Activated naive CD4-positive, alpha-beta T cell treated with anti-CD3 and anti-CD28 coated beads for 36 hours (primary cell): ENCODE measurements at regions of chr2 and their contacts with region 1.

Region 1: DNA sequence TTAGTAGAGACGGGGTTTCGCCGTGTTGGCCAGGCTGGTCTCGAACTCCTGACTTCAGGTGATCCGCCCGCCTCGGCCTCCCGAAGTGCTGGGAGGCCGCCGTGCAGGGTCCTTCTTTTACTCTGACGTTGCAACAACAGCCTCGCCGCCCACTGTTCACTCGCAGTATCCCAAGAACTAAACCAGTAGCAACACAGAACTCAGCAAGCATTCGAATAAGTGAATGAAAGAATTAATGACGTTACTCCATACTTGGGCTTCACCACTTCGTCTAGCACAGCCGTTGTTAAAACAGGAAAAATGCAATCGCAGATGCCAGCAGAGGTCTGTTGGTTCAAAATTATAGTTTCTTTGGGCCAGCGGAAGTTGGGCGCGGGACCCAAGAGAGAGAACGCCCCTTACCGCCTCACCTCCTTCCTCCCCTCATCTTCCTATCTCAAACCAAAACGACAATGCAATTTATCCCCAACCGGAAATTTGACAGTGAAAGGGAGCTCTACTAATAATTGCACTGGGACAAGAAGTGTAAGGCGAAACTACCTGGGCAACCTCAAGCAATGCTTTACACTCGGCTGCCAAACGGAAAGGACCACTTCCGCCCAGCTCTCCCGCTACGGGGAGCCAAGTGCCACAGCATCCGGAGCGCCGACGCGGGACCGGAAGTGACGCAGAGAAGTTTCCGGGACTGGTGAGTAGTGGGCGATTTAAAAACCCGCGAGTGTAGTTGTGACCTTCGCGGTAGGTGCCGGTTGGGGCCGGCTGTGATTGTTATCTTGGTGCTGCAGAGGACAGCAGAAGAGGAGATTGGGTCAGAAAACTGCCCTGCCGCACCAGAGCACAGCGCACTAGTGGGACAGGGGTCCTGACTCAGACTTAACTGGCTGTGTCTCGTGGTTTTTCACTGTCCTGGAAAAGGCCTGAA is at the starts of genes NIF3L1 and PPIL3:
- DNase-seq: peak; percentile 99
- H3K4me3 Mint-ChIP-seq: peak within 1 kb of the TSS; percentile 88
- H3K27ac Mint-ChIP-seq: peak within 1 kb of the TSS; percentile 97
- H3K4me1 Mint-ChIP-seq: peaks cover 50% of the 10 kb centered on the region
- H3K27me3 Mint-ChIP-seq: no peaks in the 10 kb centered on the region
- total RNA-seq, gene NIF3L1: 31.6 to 33.3 TPM
- total RNA-seq, gene PPIL3: 81.3 to 82.2 TPM

Region 2: GRCh38 chr2:200525882-200526651 is 362.9 kb before region 1 on chr2 and contains the start of gene SGO2:
- CTCF ChIA-PET with region 1: no interaction called
- intact Hi-C with region 1: loop called (anchors 1 kb)
- DNase-seq: peak; percentile 98
- H3K4me3 Mint-ChIP-seq: peak within 1 kb of the TSS; percentile 90
- H3K27ac Mint-ChIP-seq: peak within 1 kb of the TSS; percentile 84
- H3K4me1 Mint-ChIP-seq: peaks cover 17% of the 10 kb centered on the region
- H3K27me3 Mint-ChIP-seq: no peaks in the 10 kb centered on the region
- total RNA-seq, gene SGO2: 39.7 to 40.0 TPM

Region 3: DNA sequence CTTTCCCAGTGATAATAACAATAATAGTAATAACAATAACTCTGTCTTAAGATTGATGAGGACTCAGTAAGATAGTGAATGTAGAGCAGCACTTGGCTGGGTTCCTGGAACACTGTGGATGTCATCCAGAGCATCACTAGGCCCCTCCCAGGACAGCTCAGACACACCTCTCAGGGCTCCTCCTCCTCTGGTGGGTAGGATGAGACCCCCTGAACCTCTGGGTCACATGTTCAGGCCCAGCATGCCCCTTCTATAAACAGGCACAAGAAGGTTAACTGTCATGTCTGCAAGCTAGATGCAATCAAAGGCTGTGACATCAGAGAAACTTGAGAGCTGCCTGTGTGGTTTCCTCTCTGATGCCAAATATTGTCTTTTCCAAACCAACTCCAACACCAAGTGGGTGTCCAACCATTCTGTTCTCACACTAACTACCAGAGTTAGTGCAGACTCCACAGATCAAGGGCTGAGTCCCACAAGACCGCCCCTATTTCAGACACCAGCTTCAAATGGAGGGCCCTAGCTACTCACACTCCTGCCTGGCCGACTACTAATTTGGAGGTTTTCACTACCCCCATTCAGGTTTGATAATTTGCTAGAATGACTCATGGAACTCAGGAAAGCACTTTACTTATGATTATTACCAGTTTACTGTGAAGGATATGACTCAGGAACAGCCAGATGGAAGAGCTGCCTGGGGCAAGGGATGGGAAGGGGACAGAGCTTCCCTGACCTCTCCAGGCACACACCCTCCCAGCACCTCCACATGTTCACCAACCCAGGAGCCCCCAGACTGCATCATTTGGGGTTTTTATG is 123.6 kb before region 1 on chr2:
- CTCF ChIA-PET with region 1: no interaction called
- intact Hi-C with region 1: loop called (anchors 1 kb)
- DNase-seq: peak; percentile 70
- H3K4me3 Mint-ChIP-seq: peak overlapping the region; percentile 32
- H3K27ac Mint-ChIP-seq: peak overlapping the region; percentile 92
- H3K4me1 Mint-ChIP-seq: peaks cover 27% of the 10 kb centered on the region
- H3K27me3 Mint-ChIP-seq: no peaks in the 10 kb centered on the region

Region 4: GRCh38 chr2:200901459-200902072 is 12.6 kb after region 1 on chr2:
- CTCF ChIA-PET with region 1: interaction called, 7 read pairs
- intact Hi-C with region 1: loop called (anchors 1 kb)
- DNase-seq: peak; percentile 89
- H3K4me3 Mint-ChIP-seq: no peak overlapping the region
- H3K27ac Mint-ChIP-seq: peak overlapping the region; percentile 84
- H3K4me1 Mint-ChIP-seq: peaks cover 7% of the 10 kb centered on the region
- H3K27me3 Mint-ChIP-seq: no peaks in the 10 kb centered on the region

Region 5: DNA sequence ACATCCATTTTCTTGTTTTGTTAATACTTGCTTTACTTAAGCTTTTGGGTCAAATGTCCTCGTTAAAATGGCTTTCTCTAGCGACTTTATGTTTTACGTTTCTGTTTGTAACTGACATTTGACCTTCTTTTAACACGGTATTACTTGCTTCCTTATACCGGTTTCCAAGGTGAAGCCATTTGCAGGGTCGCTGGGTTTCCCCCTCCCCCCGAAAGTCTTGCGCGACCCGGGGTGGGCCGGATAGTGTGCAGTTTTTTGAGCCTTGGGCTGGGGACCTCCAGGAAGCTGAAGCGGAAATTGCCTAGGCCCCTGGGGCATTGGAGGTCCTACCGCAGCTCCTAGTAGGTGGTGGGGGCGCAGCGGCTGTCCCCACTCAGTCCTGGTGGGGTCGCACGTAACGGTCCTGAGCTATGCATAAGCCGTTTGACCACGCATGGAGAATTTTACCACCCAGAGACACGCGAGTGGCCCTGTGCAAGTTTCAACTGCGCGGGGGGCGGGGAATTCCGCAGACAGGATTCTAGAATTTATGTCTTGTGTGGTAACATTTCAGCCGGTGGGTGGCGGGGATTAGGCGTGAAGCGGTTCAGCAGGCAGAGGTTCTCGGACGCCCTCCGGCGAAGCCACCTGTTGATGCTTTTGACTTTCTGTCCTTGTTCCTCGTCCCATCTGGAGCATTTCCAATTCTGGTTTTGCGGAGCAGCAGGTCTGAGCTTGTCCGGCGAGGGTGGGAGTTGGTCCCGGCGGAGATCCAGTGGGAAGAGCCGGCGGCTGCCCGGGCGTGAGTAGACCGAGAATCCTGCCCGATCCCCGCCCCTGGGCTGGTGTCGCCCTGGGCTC is 229.4 kb after region 1 on chr2:
- CTCF ChIA-PET with region 1: interaction called, 4 read pairs
- intact Hi-C with region 1: loop called (anchors 1 kb)
- DNase-seq: peak; percentile 94
- H3K4me3 Mint-ChIP-seq: peak overlapping the region; percentile 96
- H3K27ac Mint-ChIP-seq: peak overlapping the region; percentile 100
- H3K4me1 Mint-ChIP-seq: peaks cover 41% of the 10 kb centered on the region
- H3K27me3 Mint-ChIP-seq: no peaks in the 10 kb centered on the region

Region 6: DNA sequence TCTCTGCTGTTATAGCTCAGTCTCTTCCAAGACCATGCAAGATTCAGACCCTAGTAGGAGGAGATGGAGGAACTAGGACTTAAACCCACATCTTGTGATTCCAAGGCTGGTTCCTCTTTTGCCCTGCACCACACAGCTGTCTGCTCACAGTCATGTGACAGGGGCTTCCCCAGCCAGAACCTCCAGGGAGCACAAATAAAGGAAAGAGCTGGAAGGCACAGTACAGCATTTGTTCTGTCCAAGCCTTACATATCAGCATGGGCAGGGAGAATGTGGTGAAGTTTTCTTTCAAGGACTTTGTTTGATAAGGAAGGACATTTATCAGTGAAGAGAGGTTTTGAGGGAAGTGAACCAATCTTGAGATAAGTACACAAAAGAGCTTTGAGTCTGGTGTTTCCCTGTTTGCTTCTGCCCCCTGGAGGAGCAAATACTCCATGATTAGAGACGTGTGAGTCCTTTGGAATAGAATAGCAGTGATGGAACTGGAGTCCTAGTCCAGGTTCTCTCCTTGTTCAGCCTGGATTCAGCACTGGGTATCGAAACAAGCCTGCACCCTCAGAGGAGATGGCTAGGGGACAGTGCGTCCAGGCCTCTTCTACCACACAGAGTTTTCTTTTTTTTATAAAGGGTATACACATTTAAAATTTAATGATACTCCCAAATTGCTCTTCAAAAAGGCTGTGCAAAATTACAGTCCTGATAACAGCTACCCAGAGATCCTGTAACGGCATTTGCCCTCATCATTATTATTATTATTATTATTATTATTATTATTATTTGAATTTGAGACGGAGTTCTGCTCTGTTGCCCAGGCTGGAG is 269.4 kb after region 1 on chr2:
- CTCF ChIA-PET with region 1: no interaction called
- intact Hi-C with region 1: loop called (anchors 1 kb)
- DNase-seq: peak; percentile 76
- H3K4me3 Mint-ChIP-seq: no peak overlapping the region
- H3K27ac Mint-ChIP-seq: peak overlapping the region; percentile 86
- H3K4me1 Mint-ChIP-seq: peaks cover 24% of the 10 kb centered on the region
- H3K27me3 Mint-ChIP-seq: no peaks in the 10 kb centered on the region